ENCODE measurements at regions of chr20 and their contacts with region 1.

Region 1: DNA sequence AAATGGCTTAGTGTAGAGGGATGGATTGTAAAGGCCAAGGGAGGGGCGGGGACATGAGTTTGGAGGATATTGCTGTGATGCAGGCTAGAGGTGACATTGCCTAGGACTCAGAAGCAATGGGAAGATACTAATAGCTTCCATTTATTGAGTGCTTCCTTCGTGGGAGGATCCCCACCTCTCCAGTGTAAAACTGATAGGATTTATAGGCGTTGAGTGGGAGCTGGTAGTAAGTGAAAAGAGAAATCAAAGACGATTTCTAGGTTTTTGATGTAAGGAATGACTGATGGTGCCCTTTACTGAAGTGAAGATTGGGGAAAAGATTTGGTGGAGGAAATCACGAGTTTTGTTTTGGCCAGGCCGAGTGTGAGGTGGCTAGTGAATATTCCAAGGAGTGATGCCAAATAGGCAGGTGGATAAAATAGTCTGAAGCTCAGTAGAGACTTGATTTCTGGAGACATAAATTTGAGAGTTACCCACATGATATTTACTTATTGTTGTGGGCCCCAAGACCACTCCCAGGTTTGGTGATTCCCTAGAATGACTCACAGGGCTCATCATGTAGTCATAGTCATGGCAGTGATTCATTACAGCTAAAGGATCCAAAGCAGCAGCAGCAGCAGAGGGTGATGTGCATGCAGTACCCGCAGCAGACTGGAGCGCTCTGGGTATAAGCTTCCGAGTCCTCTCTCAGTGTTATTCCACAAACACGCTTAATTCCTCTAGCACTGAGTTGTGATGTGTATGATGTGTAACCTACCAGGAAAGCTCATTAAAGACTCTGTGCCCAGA is 10.2 kb downstream of the RPRD1B start:
- DNase-seq: no peak

Region 2: GRCh38 chr20:37856932-37857660 is 186.6 kb before region 1 on chr20:
- in situ Hi-C with region 1: no loop called
- DNase-seq: peak; percentile 67

Region 3: GRCh38 chr20:38221119-38221589 is 177.4 kb after region 1 on chr20:
- in situ Hi-C with region 1: loop called (anchors 10 kb)
- DNase-seq: peak; percentile 76